ENCODE measurements at regions of chr1 and their contacts with region 1.

Region 1: DNA sequence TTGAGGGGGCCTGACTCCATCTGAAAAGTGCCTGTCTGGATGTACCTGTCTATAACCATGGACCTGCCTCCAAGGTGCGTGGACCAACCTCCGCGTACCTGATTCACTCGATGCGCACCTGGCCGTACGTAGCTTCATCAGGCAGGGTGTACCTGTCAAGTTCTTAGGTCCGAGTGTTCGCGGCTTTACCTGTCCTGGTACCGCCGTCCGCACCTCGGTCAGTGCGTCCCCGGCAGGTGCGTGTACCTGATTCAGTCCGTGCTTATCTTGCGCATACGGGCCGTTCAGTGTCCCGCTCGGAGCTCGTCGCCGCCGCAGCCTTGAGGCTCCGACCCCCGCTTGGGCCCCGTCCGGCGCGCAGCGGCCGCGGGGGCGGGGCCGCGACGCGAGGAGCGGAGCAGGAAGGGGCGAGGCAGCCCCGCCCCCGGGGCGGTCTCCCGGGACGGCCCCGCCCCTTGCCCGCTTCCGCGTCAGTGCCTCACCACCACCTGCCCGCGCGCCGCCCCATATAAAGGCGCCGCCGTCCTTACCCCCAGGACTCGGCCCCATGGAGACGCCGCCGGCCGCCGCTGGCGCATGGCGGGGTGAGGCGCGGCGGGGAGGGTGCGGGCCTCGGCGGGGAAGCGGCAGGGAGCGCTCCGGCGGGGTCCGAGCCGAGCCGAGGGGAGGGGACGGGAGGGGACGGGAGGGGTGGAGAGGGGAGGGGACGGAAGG is at the start of gene ZC3H12A:
- DNase-seq: peak; percentile 96
- ATAC-seq: peak; percentile 46
- H3K4me3 Mint-ChIP-seq: peak within 1 kb of the TSS; percentile 95
- H3K27ac Mint-ChIP-seq: peak within 1 kb of the TSS; percentile 98
- H3K4me1 Mint-ChIP-seq: peaks cover 42% of the 10 kb centered on the region
- H3K27me3 Mint-ChIP-seq: no peaks in the 10 kb centered on the region
- total RNA-seq, gene ZC3H12A: 29.7 to 31.2 TPM

Region 2: DNA sequence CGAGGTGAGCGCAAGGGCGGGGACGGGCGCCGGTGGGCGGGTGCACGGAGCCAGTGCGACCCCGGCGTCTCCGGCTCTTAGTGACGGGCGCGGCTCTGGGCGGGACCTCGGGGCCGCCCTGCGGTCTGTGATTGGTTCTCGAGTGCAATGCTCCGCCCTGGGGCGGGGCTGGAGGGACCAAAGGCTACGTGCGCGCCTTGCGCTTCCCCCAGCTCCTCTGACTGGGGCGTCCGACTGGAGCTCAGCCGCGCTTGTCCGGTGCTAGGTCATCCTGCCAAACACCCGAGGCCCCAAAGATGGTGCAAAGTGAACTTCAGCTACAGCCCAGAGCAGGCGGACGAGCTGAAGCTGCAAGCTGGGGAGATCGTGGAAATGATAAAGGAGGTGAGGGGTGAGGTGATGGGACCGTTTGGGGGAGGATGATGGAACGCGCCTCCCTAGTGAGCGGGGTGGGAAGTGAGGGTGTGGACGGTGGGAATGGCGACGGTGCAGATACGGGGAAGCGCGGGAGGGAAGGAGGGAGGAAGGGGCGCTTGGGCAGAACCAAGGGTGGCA is 1167.2 kb before region 1 on chr1:
- CTCF ChIA-PET with region 1: no interaction called
- POLR2A ChIA-PET with region 1: no interaction called
- intact Hi-C with region 1: loop called in 1 of 2 experiments (anchors 5 kb)
- DNase-seq: peak; percentile 96
- ATAC-seq: peak; percentile 91
- H3K4me3 Mint-ChIP-seq: peak overlapping the region; percentile 98
- H3K27ac Mint-ChIP-seq: peak overlapping the region; percentile 96
- H3K4me1 Mint-ChIP-seq: peaks cover 45% of the 10 kb centered on the region
- H3K27me3 Mint-ChIP-seq: no peaks in the 10 kb centered on the region

Region 3: DNA sequence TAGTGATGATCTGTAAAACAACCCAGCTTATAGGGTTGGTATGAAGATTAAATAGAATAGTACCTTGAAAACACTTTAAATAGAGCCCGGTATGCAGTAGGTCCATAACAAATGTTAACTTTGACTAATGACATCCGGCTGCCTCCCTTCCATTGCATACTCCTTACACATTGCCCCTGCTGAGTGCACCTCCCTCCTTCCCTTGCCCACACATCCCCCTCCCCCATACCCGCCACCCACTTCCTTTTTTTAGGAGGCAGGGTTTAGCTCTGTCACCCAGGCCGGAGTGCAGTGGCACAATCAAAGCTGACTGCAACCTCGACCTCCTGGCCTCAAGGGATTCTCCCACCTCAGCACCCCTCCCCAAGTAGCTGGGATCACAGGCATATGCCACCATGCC is 24.3 kb before region 1 on chr1:
- CTCF ChIA-PET with region 1: interaction called, 14 read pairs
- POLR2A ChIA-PET with region 1: interaction called, 5 read pairs
- intact Hi-C with region 1: loop called in 1 of 2 experiments (anchors 2 kb)
- DNase-seq: peak; percentile 66
- ATAC-seq: peak; percentile 68
- H3K4me3 Mint-ChIP-seq: no peak overlapping the region
- H3K27ac Mint-ChIP-seq: no peak overlapping the region
- H3K4me1 Mint-ChIP-seq: peaks cover 12% of the 10 kb centered on the region
- H3K27me3 Mint-ChIP-seq: peaks cover 7% of the 10 kb centered on the region

Region 4: GRCh38 chr1:37514350-37515184 is 40.4 kb after region 1 on chr1 and contains the start of gene MEAF6:
- CTCF ChIA-PET with region 1: interaction called, 19 read pairs
- POLR2A ChIA-PET with region 1: interaction called, 13 read pairs
- intact Hi-C with region 1: loop called (anchors 1 kb)
- DNase-seq: peak; percentile 91
- ATAC-seq: peak; percentile 88
- H3K4me3 Mint-ChIP-seq: peak within 1 kb of the TSS; percentile 87
- H3K27ac Mint-ChIP-seq: peak within 1 kb of the TSS; percentile 93
- H3K4me1 Mint-ChIP-seq: peaks cover 41% of the 10 kb centered on the region
- H3K27me3 Mint-ChIP-seq: no peaks in the 10 kb centered on the region
- total RNA-seq, gene MEAF6: 66.8 to 72.2 TPM

Region 5: DNA sequence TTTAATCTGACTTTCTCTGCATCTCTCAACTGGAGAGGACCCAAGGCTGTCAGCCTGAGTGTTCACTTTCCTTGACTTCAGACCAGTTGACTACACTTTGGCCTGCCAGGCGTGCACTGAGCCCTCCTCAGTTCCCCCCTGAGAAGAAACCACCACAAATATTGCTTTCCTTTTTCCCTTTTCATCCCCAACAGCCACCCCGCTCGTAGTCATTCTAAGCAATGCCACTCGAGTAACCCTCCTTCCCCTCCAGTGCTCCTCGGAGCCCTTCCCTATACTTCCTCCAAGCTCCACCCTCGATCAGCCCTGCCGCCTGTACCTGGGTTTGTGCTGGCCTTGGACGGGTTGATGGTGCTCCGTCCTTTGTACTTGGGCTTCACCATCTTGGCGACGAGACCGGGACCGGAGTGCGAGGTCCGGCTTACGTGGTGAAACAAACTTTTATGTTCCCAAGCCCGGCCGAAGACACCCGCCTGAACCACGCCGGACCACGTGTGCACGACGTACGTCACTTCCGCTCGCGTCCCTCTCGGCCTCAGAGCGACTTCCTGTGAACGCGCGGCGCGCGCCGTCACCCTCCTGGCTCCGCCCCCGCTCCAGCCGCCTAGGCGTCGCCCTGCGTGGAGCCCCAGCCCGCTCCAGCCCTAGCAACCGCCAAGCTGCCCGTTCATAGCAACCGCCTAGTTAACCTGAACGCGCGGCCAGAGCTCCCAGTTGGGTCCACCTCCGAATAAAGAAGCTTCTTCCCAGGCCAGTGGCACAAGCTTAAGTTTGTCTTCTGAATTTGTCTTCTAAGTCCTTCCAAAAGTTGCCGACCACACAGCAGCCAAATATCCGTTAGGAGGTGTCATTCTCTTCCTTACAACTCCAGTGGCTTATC is 121.5 kb after region 1 on chr1 and contains the start of gene GNL2:
- CTCF ChIA-PET with region 1: no interaction called
- POLR2A ChIA-PET with region 1: no interaction called
- intact Hi-C with region 1: loop called (anchors 1 to 5 kb)
- DNase-seq: peak; percentile 99
- ATAC-seq: peak; percentile 98
- H3K4me3 Mint-ChIP-seq: peak within 1 kb of the TSS; percentile 98
- H3K27ac Mint-ChIP-seq: peak within 1 kb of the TSS; percentile 92
- H3K4me1 Mint-ChIP-seq: peaks cover 37% of the 10 kb centered on the region
- H3K27me3 Mint-ChIP-seq: no peaks in the 10 kb centered on the region
- total RNA-seq, gene GNL2: 82.3 to 98.8 TPM

Region 6: GRCh38 chr1:37859507-37860345 is 385.5 kb after region 1 on chr1 and contains the start of gene MTF1:
- CTCF ChIA-PET with region 1: no interaction called
- POLR2A ChIA-PET with region 1: no interaction called
- intact Hi-C with region 1: loop called (anchors 5 to 10 kb)
- DNase-seq: peak; percentile 98
- ATAC-seq: peak; percentile 98
- H3K4me3 Mint-ChIP-seq: peak within 1 kb of the TSS; percentile 87
- H3K27ac Mint-ChIP-seq: peak within 1 kb of the TSS; percentile 93
- H3K4me1 Mint-ChIP-seq: peaks cover 40% of the 10 kb centered on the region
- H3K27me3 Mint-ChIP-seq: no peaks in the 10 kb centered on the region
- total RNA-seq, gene MTF1: 16.1 to 23.8 TPM

Region 7: DNA sequence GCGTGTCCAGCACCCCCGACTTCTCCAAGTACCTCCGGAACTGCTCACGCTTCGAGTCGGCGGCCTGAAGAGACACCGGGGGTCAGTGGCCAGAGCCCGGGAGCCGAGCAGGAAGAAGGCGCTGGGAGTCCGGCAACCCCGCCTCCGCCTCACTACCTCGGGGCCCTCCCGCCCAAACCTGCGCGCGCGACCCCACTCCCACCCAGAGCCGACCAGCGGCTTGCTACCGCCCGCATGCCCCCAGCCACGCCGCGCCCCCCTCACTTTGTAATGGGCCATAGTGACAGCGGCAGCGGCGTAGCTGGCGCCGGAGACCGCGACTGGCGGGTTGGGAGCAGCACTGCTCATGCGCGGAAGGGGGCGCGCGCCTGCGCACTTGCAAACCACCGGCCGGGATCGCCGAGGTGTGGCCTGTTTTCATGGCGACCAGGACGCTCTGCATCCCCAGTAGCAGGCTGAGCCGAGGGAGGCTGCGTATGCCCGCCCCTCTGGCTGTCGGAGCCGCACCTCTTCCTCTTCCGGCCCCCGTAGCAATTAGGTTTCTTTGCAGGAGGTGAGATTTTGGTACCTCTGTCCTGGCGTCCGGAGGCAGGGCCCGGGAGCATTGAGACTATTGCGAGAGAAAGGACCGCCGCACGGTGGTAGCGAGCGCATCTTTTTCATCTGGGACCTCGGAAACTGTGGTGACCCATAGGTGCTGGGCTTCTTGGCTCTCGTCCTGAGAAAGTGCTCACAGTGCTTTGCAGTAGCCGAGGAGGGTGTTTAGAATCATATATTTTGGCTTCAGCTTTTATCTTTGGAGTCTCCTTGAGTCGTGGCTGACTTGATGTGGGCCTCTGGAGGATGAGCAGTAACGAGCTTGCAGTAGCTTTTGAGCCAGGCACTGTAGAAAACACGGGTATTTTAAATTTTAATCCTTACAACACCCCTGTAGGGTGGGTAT is 1399.1 kb after region 1 on chr1 and contains the start of gene MYCBP:
- CTCF ChIA-PET with region 1: no interaction called
- POLR2A ChIA-PET with region 1: no interaction called
- intact Hi-C with region 1: loop called in 1 of 2 experiments (anchors 5 kb)
- DNase-seq: peak; percentile 97
- ATAC-seq: peak; percentile 99
- H3K4me3 Mint-ChIP-seq: peak within 1 kb of the TSS; percentile 92
- H3K27ac Mint-ChIP-seq: peak within 1 kb of the TSS; percentile 83
- H3K4me1 Mint-ChIP-seq: peaks cover 26% of the 10 kb centered on the region
- H3K27me3 Mint-ChIP-seq: no peaks in the 10 kb centered on the region
- total RNA-seq, gene MYCBP: 44.4 to 46.8 TPM